Endothelial cell of umbilical vein (primary cell): ENCODE measurements at regions of chr6 and their contacts with region 1.

Region 1: GRCh38 chr6:53064726-53065215 is 433 bp upstream of the FBXO9 start:
- DNase-seq: peak; percentile 98
- H3K4me3 ChIP-seq: peak overlapping the region; percentile 83 to 87 (median 87)
- H3K27ac ChIP-seq: peak overlapping the region; percentile 53
- H3K4me1 ChIP-seq: peaks cover 16% of the 10 kb centered on the region
- H3K27me3 ChIP-seq: no peaks in the 10 kb centered on the region
- CTCF ChIP-seq: no peak
- POLR2A ChIP-seq: peak; percentile 46

Region 2: DNA sequence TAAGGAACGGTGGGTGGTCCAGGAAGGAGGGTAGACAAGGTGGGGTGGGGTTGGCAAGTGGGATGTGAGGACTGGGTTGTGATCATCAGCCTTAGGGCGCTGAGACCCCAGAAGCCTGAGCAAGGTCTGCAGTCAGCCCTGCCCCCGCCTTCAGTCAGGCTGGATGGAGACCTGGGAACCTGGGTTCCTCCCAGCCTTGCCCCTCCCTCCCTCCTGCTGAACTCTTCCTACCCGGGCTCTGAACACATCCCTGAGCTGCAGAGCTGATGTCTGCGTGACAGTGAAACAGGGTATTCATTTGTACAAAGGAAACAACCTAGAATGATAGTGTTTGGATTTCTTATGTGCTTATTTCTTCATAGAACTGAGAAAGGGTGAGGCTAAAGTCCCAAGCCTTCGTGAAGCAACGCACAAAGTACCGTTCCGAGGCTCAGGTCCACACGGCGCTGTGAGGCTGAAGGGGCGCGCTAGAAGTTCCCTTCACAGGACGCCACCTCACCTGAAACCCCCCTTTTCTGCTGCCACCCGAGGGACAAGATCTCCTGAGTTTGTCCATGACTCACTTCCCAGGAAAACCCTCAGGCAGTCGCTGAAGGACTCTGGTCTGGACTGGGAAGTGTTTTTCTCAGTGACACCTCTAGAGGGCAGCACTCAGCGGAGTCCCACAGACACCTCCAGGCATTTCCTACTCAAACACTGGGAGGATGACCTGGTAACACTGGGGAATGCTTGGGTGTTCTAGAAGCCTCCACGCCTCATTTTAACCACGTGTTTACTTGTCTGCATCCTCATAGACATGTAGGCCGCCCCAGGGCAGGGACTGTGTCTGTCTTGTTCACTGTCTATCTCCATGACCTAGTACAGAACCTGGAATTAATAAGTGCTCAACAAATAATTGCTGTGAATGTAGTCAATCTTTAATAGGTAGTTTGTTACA is 225.4 kb before region 1 on chr6:
- CTCF ChIA-PET with region 1: no interaction called
- POLR2A ChIA-PET with region 1: no interaction called
- dilution Hi-C with region 1: no loop called
- intact Hi-C with region 1: loop called (anchors 1 kb)
- DNase-seq: peak; percentile 65
- H3K4me3 ChIP-seq: no peak overlapping the region
- H3K27ac ChIP-seq: no peak overlapping the region
- H3K4me1 ChIP-seq: no peaks in the 10 kb centered on the region
- H3K27me3 ChIP-seq: peaks cover 0 to 5% of the 10 kb centered on the region in 2 experiments
- CTCF ChIP-seq: peak; percentile 66 to 78
- POLR2A ChIP-seq: no peak

Region 3: DNA sequence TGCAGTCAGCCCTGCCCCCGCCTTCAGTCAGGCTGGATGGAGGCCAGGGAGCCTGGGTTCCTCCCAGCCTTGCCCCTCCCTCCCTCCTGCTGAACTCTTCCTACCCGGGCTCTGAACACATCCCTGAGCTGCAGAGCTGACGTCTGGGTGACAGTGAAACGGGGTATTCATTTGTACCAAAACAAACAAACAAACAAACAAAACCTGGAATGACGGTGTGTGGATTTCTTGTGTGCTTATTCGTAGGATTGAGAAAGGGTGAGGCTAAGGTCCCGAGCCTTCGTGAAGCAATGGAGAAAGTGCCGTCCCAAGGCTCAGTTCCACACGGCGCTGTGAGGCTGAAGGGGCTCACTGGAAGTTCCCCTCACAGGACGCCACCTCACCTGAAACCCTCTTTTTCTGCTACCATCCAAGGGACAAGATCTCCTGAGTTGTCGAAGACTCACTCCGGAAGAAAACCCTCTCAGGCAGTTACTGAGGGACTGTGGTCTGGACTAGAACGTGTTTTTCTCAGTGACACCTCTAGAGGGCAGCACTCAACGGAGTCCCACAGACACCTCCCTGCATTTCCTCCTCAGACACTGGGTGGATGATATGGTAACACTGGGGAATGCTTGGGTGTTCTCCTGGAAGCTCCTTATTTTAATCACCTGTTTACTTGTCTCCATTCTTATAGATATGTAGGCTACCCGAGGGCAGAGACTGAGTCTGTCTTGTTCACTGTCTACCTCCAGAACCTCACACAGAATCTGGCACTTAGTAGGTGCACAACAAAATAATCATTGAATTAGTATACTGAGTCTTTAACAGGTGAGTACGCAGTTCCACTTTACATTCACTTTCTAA is 182.6 kb before region 1 on chr6:
- CTCF ChIA-PET with region 1: no interaction called
- POLR2A ChIA-PET with region 1: no interaction called
- dilution Hi-C with region 1: no loop called
- intact Hi-C with region 1: loop called (anchors 1 kb)
- DNase-seq: peak; percentile 65
- H3K4me3 ChIP-seq: peak overlapping the region in 2 of 3 experiments; percentile 45 to 67
- H3K27ac ChIP-seq: no peak overlapping the region
- H3K4me1 ChIP-seq: peaks cover 4% of the 10 kb centered on the region
- H3K27me3 ChIP-seq: peaks cover 1 to 2% of the 10 kb centered on the region in 2 experiments
- CTCF ChIP-seq: peak; percentile 81 to 88
- POLR2A ChIP-seq: no peak

Region 4: GRCh38 chr6:52904562-52905279 is 160.1 kb before region 1 on chr6:
- CTCF ChIA-PET with region 1: no interaction called
- POLR2A ChIA-PET with region 1: no interaction called
- dilution Hi-C with region 1: no loop called
- intact Hi-C with region 1: no loop called
- DNase-seq: no peak
- H3K4me3 ChIP-seq: no peak overlapping the region
- H3K27ac ChIP-seq: no peak overlapping the region
- H3K4me1 ChIP-seq: no peaks in the 10 kb centered on the region
- H3K27me3 ChIP-seq: no peaks in the 10 kb centered on the region
- CTCF ChIP-seq: peak in 1 of 2 donors; percentile 19
- POLR2A ChIP-seq: no peak